ENCODE measurements at regions of chr3 and their contacts with region 1.

Region 1: GRCh38 chr3:179147873-179148615 is at the start of gene PIK3CA:
- DNase-seq: peak; percentile 97
- H3K4me3 Mint-ChIP-seq: peak within 1 kb of the TSS; percentile 91
- H3K27ac Mint-ChIP-seq: peak within 1 kb of the TSS; percentile 95
- H3K4me1 Mint-ChIP-seq: peaks cover 26% of the 10 kb centered on the region
- H3K27me3 Mint-ChIP-seq: peaks cover 19% of the 10 kb centered on the region
- total RNA-seq, gene PIK3CA: 17.3 and 18.5 TPM in 2 replicates

Region 2: GRCh38 chr3:177337541-177338331 is 1810.3 kb before region 1 on chr3:
- intact Hi-C with region 1: loop called (anchors 5 kb)
- DNase-seq: peak; percentile 87
- H3K4me3 Mint-ChIP-seq: peak overlapping the region; percentile 29
- H3K27ac Mint-ChIP-seq: peak overlapping the region; percentile 84
- H3K4me1 Mint-ChIP-seq: peaks cover 41% of the 10 kb centered on the region
- H3K27me3 Mint-ChIP-seq: no peaks in the 10 kb centered on the region

Region 3: DNA sequence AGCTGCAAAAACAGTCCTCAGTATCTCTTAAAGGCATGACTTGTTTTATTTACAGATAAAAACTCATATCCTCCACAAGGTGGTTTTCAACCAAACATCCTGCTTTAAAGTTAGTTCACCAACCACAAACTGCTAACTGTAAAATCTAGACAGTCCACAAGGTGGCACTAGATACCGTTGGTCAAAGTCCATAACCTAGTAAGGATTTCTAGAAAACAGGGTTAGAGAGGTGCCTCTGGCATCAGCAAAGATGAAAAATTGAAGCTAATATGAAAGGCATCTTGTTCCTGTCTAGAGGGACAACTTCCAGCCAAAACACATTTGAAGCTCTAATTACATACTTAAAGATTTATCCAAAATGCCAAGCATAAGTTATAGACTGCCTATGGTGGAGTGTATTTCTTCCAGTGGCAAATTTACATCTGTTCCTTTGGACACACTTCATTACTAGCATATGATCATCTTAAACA is 132.5 kb before region 1 on chr3:
- intact Hi-C with region 1: loop called (anchors 1 kb)
- DNase-seq: peak; percentile 94
- H3K4me3 Mint-ChIP-seq: no peak overlapping the region
- H3K27ac Mint-ChIP-seq: peak overlapping the region; percentile 5
- H3K4me1 Mint-ChIP-seq: peaks cover 28% of the 10 kb centered on the region
- H3K27me3 Mint-ChIP-seq: peaks cover 14% of the 10 kb centered on the region

Region 4: GRCh38 chr3:179105881-179106280 is 42.2 kb before region 1 on chr3:
- intact Hi-C with region 1: loop called (anchors 2 kb)
- DNase-seq: no peak
- H3K4me3 Mint-ChIP-seq: no peak overlapping the region
- H3K27ac Mint-ChIP-seq: no peak overlapping the region
- H3K4me1 Mint-ChIP-seq: peaks cover 3% of the 10 kb centered on the region
- H3K27me3 Mint-ChIP-seq: peaks cover 10% of the 10 kb centered on the region

Region 5: DNA sequence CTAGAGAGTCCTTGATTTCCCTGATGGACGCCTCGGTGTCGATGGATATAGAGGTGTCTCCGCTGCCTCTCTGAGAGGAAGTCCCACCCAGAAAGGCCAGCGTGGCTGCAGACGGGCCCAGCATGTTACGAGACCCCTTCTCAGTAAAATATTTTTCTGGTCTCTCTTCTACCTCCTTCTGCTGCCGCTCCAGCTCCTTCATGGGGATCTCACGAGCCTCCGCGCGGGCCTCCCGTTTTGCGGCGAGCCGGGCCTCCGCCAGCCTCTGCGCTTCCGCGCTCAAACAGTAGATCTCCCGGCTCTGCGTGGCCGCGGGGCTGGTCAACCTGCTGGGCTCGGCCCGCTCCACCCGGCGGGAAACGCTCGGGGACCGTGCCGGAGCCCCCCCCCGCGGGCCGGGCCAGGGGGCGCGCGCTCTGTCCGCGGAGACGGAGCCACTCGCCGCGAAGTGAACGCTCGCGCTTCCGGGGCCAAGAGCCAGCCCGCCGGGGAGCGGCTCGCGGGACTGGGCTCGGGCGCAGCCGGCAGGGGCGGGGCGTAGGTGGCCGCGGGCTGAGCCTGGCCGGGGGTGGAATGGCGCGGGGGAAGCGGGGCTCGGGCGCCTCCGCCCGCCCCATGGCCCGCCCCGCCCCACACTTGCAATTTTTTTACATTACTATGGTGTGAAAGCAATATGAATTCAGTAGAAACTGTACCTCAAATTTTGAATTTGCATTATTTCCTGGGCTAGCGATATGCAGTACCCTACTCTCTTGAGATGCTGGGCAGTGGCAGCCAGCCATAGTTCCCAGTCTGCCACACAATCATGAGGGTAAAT is 113.1 kb after region 1 on chr3:
- intact Hi-C with region 1: loop called (anchors 2 kb)
- DNase-seq: peak; percentile 93
- H3K4me3 Mint-ChIP-seq: peak overlapping the region; percentile 79
- H3K27ac Mint-ChIP-seq: no peak overlapping the region
- H3K4me1 Mint-ChIP-seq: peaks cover 24% of the 10 kb centered on the region
- H3K27me3 Mint-ChIP-seq: peaks cover 22% of the 10 kb centered on the region

Region 6: GRCh38 chr3:179562591-179563270 is 414.7 kb after region 1 on chr3 and contains the start of gene ACTL6A:
- intact Hi-C with region 1: loop called (anchors 1 kb)
- DNase-seq: peak; percentile 99
- H3K4me3 Mint-ChIP-seq: peak within 1 kb of the TSS; percentile 98
- H3K27ac Mint-ChIP-seq: peak within 1 kb of the TSS; percentile 97
- H3K4me1 Mint-ChIP-seq: peaks cover 27% of the 10 kb centered on the region
- H3K27me3 Mint-ChIP-seq: peaks cover 19% of the 10 kb centered on the region
- total RNA-seq, gene ACTL6A: 127 and 131 TPM in 2 replicates

Measured in activated CD4-positive, alpha-beta T cell treated with anti-CD3 and anti-CD28 coated beads, Interleukin-2, amount 10 ng/mL, durations not matched to agents 24 days and 14 days (primary cell).